PC-9 (cell line): ENCODE measurements at regions of chr12 and their contacts with region 1.

Region 1: GRCh38 chr12:20097626-20098025 is 270.7 kb upstream of the PDE3A start:
- DNase-seq: no peak
- H3K4me3 ChIP-seq: no peak overlapping the region
- H3K27ac ChIP-seq: no peak overlapping the region
- H3K4me1 ChIP-seq: no peaks in the 10 kb centered on the region
- H3K27me3 ChIP-seq: no peaks in the 10 kb centered on the region
- CTCF ChIP-seq: no peak

Region 2: DNA sequence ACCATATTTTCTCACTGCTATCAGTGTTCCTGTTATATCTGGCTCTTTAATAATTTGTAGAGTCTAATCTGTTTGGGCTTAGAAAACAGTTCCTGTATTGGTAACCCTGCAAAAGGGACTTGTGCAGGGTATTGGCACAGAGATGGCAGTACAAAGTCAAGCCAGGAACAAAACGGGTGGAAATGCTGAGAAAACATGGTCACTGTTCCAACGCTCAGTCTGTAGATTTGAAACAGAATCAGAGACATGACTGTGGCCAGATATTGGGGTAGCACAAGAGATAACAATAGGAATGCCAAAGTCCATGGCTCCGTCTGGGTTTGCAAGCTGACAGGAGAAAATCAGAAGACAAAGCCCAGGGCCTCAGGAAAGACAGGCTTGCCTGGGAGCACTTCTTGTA is 20.0 kb before region 1 on chr12:
- CTCF ChIA-PET with region 1: no interaction called
- POLR2A ChIA-PET with region 1: no interaction called
- intact Hi-C with region 1: loop called (anchors 2 kb)
- DNase-seq: no peak
- H3K4me3 ChIP-seq: no peak overlapping the region
- H3K27ac ChIP-seq: no peak overlapping the region
- H3K4me1 ChIP-seq: no peaks in the 10 kb centered on the region
- H3K27me3 ChIP-seq: no peaks in the 10 kb centered on the region
- CTCF ChIP-seq: no peak